Ascending aorta (tissue), 2 donors: ENCODE measurements at regions of chr17 and their contacts with region 1.

Region 1: GRCh38 chr17:28902819-28903545 is at the start of gene DHRS13:
- DNase-seq: peak; percentile 49 to 92
- H3K4me3 ChIP-seq: peak within 1 kb of the TSS; percentile 92
- H3K27ac ChIP-seq: peak within 1 kb of the TSS; percentile 76 to 83
- H3K4me1 ChIP-seq: peaks cover 0 to 13% of the 10 kb centered on the region in 2 donors
- H3K27me3 ChIP-seq: no peaks in the 10 kb centered on the region
- CTCF ChIP-seq: peak; percentile 70 to 88 (median 75)
- total RNA-seq, gene DHRS13: 16.5 TPM

Region 2: GRCh38 chr17:28750178-28751047 is 152.6 kb before region 1 on chr17:
- intact Hi-C with region 1: no loop called
- DNase-seq: peak; percentile 69 to 96
- H3K4me3 ChIP-seq: no peak overlapping the region
- H3K27ac ChIP-seq: no peak overlapping the region
- H3K4me1 ChIP-seq: peaks cover 10 to 16% of the 10 kb centered on the region in 2 donors
- H3K27me3 ChIP-seq: no peaks in the 10 kb centered on the region
- CTCF ChIP-seq: peak; percentile 100

Region 3: DNA sequence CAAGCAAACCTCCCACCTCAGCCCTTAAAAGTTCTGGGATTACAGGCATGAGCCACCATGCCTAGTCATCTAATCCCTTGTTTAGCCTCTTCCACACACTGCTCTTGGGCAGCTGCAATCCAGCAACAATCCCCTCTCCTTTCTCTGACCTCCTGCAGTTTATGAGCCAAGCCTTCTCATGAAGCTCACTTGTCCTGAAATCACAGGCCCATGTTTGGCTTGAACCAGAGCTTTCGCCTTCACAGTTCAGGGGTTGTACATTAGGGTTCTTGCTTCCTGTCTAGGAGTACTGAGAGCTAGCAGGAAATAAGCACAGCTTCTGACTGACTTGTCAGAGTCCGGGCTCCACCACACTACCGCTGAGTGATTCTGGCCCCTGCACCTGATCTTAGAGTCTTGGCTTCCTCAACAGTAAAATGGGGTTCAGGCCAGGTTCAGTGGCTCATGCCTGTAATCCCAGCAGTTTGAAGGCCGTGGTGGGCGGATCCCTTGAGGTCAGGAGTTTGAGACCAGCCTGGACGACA is 31.9 kb before region 1 on chr17:
- intact Hi-C with region 1: loop called (anchors 1 kb)
- DNase-seq: no peak
- H3K4me3 ChIP-seq: no peak overlapping the region
- H3K27ac ChIP-seq: no peak overlapping the region
- H3K4me1 ChIP-seq: no peaks in the 10 kb centered on the region
- H3K27me3 ChIP-seq: no peaks in the 10 kb centered on the region
- CTCF ChIP-seq: no peak